Ascending aorta (tissue), 2 donors: ENCODE measurements at regions of chr19 and their contacts with region 1.

Region 1: DNA sequence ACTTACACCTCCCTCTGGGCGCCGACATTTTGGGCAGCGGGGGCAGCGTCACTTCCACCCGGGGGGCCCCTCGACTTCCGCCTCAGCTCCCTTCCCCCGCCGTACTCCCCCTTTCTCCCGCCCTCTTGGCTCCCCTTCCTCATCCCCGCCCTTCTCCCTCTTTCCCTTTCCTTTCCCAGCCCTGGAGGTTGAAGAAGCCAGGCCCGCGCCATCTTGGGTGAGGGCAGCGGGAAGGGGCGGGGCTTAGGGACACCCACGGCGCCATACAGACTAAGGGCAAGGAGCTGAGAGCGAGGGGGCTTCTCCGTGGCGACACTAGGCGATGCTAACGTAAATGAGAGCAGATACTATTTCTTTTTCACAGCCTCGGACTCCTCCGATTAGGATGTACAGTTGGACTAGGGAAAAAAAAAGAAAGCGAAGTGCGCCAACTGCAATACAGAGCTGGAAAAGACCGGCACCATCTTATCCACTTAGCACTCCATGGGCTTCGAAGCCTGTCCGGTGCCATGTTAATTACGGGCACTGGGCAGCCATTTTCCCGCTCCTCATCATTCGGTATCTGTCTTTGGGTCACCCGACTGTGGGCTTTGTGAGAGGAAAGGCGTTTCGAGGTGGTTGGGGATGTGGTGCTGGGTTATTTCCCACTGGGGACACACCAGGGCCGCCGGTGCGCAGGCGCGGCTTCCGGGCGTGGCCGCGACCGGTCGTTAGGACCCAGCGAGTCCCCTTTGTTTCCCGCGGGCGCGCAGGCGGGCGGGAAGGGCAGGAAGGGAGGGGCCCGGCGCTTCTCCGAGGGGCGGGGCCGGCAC is at the start of gene FIZ1:
- DNase-seq: peak; percentile 97 to 99
- H3K4me3 ChIP-seq: peak within 1 kb of the TSS; percentile 82 to 89
- H3K27ac ChIP-seq: peak within 1 kb of the TSS; percentile 99 to 100
- H3K4me1 ChIP-seq: peaks cover 3 to 4% of the 10 kb centered on the region in 2 donors
- H3K27me3 ChIP-seq: no peaks in the 10 kb centered on the region
- CTCF ChIP-seq: no peak
- total RNA-seq, gene FIZ1: 30.5 TPM

Region 2: GRCh38 chr19:55339048-55339888 is 260.4 kb before region 1 on chr19 and contains the start of gene KMT5C:
- intact Hi-C with region 1: loop called (anchors 1 kb)
- DNase-seq: peak; percentile 100
- H3K4me3 ChIP-seq: peak within 1 kb of the TSS; percentile 82 to 84
- H3K27ac ChIP-seq: peak within 1 kb of the TSS; percentile 72 to 89
- H3K4me1 ChIP-seq: peaks cover 5 to 17% of the 10 kb centered on the region in 2 donors
- H3K27me3 ChIP-seq: no peaks in the 10 kb centered on the region
- CTCF ChIP-seq: peak; percentile 33 to 50 (median 47)
- total RNA-seq, gene KMT5C: 21.7 TPM

Region 3: DNA sequence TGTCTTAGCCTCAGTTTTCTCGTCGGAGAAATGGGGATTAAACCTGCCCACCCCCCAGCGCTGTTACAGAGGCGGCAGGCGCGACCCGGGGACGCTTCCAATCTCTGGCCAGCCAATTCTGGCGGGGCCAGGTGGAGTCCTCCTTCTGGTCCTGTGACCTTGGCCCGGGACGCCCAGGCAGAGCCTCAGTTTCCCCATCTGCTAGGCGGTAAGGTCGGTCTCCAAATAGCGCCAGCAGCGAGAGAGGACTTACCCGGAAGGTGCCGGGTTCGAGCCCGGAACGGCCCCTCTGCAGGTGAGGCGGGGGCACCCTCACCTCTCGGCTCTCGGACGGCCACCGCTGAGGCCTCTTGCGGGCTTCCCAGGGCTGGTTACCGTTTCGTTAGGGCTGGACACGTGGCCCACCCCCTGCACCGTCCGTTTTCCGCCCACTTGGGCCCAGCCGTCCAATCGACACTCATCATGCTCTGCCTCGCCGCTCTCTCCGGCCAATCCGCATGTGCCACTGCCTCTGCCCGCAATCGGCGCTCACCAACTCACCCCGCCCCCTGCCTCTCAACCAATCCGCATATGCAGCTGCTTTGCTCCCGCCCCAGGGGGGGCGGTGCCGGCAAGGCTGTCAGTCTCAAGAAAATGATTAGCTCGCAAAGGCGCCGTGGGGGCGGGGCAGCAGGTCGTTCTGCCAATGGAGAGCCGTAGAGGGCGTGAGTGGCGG is 138.3 kb before region 1 on chr19 and contains the start of gene ISOC2:
- intact Hi-C with region 1: loop called (anchors 1 kb)
- DNase-seq: peak; percentile 100
- H3K4me3 ChIP-seq: peak within 1 kb of the TSS; percentile 58 to 77
- H3K27ac ChIP-seq: peak within 1 kb of the TSS; percentile 67 to 79
- H3K4me1 ChIP-seq: peaks cover 0 to 5% of the 10 kb centered on the region in 2 donors
- H3K27me3 ChIP-seq: no peaks in the 10 kb centered on the region
- CTCF ChIP-seq: no peak
- total RNA-seq, gene ISOC2: 96.7 TPM

Region 4: GRCh38 chr19:55516878-55517620 is 82.6 kb before region 1 on chr19:
- intact Hi-C with region 1: loop called (anchors 2 kb)
- DNase-seq: peak; percentile 47 to 96
- H3K4me3 ChIP-seq: peak overlapping the region; percentile 49 to 57
- H3K27ac ChIP-seq: peak overlapping the region; percentile 36 to 74
- H3K4me1 ChIP-seq: peaks cover 0 to 12% of the 10 kb centered on the region in 2 donors
- H3K27me3 ChIP-seq: no peaks in the 10 kb centered on the region
- CTCF ChIP-seq: peak; percentile 83 to 95 (median 95)

Region 5: GRCh38 chr19:55580628-55581144 is 19.0 kb before region 1 on chr19 and contains the start of gene ZNF579:
- intact Hi-C with region 1: loop called (anchors 2 kb)
- DNase-seq: peak; percentile 32 to 89
- H3K4me3 ChIP-seq: peak within 1 kb of the TSS; percentile 67 to 85
- H3K27ac ChIP-seq: peak within 1 kb of the TSS; percentile 89 to 92
- H3K4me1 ChIP-seq: peaks cover 2 to 8% of the 10 kb centered on the region in 2 donors
- H3K27me3 ChIP-seq: no peaks in the 10 kb centered on the region
- CTCF ChIP-seq: no peak
- total RNA-seq, gene ZNF579: 14.2 TPM